Left colon (tissue), 2 donors: ENCODE measurements at regions of chr10 and their contacts with region 1.

Region 1: DNA sequence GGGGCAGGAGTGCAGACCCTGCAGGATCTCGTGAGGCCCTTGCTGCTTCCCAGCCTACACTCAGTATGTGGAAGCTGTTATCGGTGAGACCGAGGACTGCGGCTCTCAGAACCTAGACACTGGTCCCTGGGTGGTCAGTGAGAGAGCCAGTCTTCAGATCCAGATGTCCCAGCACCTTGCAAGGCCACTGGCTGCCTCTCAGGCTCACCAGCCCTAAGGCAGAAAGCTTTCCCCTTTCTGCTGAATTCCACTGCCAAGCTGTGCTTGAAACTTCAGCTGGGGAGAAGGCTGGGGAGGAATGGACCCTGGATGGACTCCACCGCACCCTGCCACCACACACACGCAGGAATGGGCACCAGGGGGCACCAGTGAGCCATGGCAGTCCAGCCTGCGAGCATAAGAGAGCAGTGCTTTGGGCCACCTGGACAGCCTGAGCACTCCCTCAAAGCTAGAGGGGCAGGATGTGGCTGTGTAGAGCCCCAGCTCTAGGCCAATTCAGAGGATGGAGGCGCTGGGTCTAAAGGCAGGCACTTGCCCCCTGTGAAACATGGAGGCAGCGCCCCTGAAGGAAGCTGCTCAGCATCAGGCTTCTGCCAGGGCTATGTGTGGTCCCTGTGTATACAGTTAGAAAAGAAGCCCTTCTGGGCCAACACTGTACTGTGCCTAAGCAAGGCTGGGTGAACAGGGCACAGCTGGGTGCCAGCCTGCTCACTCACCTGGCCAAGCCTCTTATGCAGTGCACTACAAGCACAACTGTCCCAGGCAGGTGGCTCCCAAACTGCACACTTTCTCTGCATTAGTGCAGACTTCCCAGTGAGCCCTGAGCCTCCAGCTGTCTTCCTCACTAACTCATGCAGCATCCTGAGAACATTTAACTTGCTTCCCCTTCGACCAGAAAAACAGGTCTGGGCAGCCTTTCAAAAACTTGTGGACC is 21.6 kb downstream of the TMEM72 start:
- DNase-seq: peak; percentile 82 to 97
- ATAC-seq: peak; percentile 85

Region 2: DNA sequence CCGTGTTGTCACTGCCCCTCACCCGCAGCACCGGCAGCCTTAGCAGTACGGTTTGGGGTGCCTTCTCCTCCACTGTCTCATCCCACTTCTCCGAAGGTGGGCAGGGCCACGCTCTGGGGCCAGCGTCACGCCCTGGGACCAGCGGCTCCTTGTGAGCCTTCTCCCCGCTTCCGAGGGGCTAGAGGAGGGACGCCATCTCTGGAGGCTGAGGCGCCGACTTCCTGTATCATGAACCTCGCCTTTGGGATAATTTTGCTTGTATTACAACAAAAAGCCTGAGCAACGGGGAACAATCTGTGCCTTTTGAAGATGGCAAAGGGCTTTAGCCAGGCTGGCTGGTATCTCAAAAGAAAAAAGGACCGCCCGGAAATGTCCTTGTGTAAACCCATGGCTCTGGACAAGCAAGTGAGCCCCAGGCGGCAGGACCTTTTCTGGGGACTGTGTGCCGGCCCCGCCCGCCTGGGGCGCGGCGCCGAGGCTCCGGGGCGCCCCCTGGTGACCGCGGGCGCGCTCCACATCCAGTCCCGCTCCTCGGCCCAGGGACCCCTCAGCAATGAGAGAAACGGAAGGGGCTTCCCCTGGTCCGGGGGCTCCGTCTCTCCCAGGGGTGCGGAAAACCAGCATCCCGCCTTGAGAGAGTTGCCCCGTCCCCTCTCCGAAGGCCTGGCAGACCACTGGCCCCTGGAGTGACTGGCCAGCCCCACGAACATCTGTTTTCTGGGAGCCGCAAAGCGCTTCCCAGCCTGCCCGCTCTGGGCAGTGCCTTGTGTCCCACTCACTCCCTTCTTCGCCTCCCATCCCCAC is 42.0 kb after region 1 on chr10:
- intact Hi-C with region 1: loop called in 1 of 2 experiments (anchors 5 kb)
- DNase-seq: peak; percentile 73 to 76
- ATAC-seq: peak; percentile 76